Heart left ventricle (tissue), 16 donors: ENCODE measurements at regions of chr7 and their contacts with region 1.

Region 1: DNA sequence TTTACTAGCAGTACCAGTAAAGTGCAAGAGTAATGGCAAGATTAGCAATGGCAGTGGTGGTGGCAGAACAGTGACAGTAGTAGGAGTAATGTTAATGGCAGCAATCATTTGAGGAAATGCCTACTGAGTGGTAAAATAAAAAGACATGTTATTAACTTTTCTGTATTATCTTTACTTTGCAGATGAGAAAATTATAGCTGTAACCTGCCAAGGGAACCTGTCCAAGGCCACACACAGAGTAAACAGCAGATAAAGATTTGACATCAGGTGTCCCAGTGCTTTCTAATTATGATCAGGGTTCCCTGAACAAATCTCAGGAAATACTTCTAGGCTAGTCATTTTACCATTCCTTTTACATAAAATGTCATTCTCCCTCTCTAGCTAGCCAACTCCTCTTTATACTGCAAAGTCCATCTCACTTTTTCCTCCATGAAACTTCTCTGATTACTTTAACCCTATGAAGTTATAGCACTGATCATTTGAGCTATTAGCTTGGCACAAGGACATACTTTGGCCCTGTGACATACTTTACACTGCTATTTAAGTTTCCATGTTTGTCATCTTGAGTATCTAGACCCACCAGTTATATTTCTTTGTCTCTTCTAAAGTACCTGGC is 219.1 kb downstream of the TAX1BP1 start:
- DNase-seq: no peak
- ATAC-seq: no peak
- H3K4me3 ChIP-seq: no peak overlapping the region
- H3K27ac ChIP-seq: no peak overlapping the region
- H3K4me1 ChIP-seq: peaks cover 0 to 8% (median 0%) of the 10 kb centered on the region in 12 donors
- H3K27me3 ChIP-seq: no peaks in the 10 kb centered on the region
- CTCF ChIP-seq: no peak
- POLR2A ChIP-seq: no peak

Region 2: GRCh38 chr7:27564881-27565482 is 394.1 kb before region 1 on chr7:
- intact Hi-C with region 1: no loop called
- DNase-seq: no peak
- ATAC-seq: no peak
- H3K4me3 ChIP-seq: no peak overlapping the region
- H3K27ac ChIP-seq: no peak overlapping the region
- H3K4me1 ChIP-seq: no peaks in the 10 kb centered on the region
- H3K27me3 ChIP-seq: no peaks in the 10 kb centered on the region
- CTCF ChIP-seq: no peak
- POLR2A ChIP-seq: no peak

Region 3: DNA sequence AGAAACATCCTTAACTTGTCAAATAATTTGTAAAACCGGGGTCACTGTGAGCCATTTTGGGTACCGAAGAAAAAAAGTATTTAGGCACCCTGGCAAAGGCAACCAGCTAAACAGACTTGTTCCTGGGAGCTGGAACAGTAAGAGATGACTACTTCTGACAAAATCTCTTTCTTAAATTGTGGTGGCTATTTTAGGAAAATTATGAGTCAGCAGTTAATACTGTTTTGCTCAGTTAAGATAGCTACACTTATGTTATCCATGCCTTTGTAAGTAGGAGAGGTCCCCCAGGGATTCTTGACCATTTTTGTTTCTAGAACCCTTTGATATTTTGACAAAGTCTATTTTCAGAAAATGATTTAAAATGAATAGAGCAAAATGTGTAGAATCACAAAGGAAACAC is 150.4 kb before region 1 on chr7:
- intact Hi-C with region 1: no loop called
- DNase-seq: no peak
- ATAC-seq: peak; percentile 68 to 88 (median 78)
- H3K4me3 ChIP-seq: no peak overlapping the region
- H3K27ac ChIP-seq: peak overlapping the region in 8 of 12 donors; percentile 5 to 39 (median 22)
- H3K4me1 ChIP-seq: peaks cover 0 to 17% (median 9%) of the 10 kb centered on the region in 12 donors
- H3K27me3 ChIP-seq: no peaks in the 10 kb centered on the region
- CTCF ChIP-seq: no peak
- POLR2A ChIP-seq: no peak

Region 4: DNA sequence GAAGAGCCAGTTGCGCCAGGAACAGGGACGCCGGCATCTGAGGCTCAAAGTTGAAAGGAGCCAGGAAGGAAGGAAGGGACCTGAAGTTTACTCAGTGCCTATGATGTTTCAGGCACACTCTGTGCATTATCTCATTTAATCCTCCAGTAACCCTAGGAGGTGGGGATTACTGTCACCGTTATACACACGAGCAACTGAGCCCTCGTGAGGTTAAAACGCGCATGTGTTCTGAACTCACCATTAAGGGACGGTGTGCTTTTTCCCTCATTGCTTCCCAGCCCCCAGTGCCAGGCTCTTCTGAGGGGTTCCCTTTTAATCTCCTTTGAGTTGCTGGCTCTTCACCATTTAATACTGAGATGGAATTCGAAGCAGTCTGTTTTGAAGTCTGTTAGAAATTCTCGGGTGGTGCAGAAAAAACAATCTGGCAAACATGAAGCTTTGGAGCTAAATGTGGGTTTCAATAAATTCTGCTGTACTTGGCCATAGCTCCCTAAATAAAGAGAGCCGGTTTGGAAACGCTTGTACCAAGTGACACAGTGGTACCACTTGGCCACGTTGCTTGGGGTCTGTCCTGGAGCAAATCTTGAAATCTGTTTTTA is 116.8 kb before region 1 on chr7:
- intact Hi-C with region 1: no loop called
- DNase-seq: no peak
- ATAC-seq: no peak
- H3K4me3 ChIP-seq: no peak overlapping the region
- H3K27ac ChIP-seq: no peak overlapping the region
- H3K4me1 ChIP-seq: no peaks in the 10 kb centered on the region
- H3K27me3 ChIP-seq: no peaks in the 10 kb centered on the region
- CTCF ChIP-seq: no peak
- POLR2A ChIP-seq: no peak

Region 5: DNA sequence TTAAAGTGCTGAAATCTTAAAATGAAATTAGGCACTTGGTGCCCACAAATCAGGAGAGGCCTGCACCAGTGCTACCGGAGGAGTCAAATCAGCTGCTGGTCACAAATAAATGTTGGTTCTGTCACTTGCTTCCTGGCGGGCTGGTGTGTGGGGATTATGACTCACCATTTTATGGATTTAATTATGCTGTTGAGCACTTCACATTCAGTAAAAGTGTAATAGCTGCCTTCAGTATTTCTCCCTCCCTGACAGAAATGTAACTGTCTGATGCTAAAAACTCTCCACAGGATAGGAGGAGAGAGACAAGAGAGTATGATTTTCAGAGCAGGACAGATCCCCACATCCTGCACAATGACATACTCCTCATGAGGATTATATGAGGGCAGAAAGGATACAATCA is 35.6 kb after region 1 on chr7:
- intact Hi-C with region 1: loop called in 1 of 10 experiments (anchors 5 kb)
- DNase-seq: peak in 1 of 5 donors; percentile 28
- ATAC-seq: peak; percentile 17 to 81 (median 32)
- H3K4me3 ChIP-seq: no peak overlapping the region
- H3K27ac ChIP-seq: no peak overlapping the region
- H3K4me1 ChIP-seq: peaks cover 0 to 38% (median 21%) of the 10 kb centered on the region in 12 donors
- H3K27me3 ChIP-seq: no peaks in the 10 kb centered on the region
- CTCF ChIP-seq: no peak
- POLR2A ChIP-seq: no peak

Region 6: GRCh38 chr7:28192786-28193585 is 233.9 kb after region 1 on chr7:
- intact Hi-C with region 1: no loop called
- DNase-seq: no peak
- ATAC-seq: no peak
- H3K4me3 ChIP-seq: no peak overlapping the region
- H3K27ac ChIP-seq: no peak overlapping the region
- H3K4me1 ChIP-seq: peaks cover 0 to 15% (median 0%) of the 10 kb centered on the region in 12 donors
- H3K27me3 ChIP-seq: no peaks in the 10 kb centered on the region
- CTCF ChIP-seq: no peak
- POLR2A ChIP-seq: no peak